ENCODE measurements at regions of chr4 and their contacts with region 1.

Region 1: DNA sequence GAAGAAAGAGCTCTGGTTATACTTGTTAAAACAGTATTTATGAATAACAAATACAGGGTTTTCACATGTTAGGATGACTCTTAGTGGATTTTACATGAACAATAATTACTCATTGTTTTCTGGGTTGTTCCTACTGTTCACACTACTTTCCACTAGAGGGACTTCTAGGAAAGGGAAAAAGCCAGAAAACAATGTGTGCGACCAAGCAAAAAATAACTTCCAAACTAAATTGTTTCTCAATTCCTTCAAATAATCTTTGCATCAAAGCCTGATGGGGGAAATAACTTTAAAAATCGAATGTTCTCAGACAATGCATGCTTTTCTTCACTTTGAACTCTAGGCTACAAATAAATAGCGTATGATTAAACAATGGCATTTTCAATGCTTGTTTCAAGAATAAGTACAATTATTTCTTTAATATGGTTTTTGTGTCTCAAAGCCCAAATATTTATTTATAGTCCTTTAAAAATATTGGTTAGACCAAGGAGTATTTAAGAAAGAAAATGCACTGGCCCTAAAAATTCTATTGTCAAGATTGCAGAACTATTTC is 72.1 kb upstream of the ETNPPL start:
- DNase-seq: no peak
- ATAC-seq: no peak
- H3K4me3 ChIP-seq: no peak overlapping the region
- H3K27ac ChIP-seq: no peak overlapping the region
- H3K4me1 ChIP-seq: peaks cover 7 to 10% of the 10 kb centered on the region in 2 donors
- H3K27me3 ChIP-seq: no peaks in the 10 kb centered on the region
- CTCF ChIP-seq: peak; percentile 24 to 62 (median 50)
- POLR2A ChIP-seq: no peak

Region 2: GRCh38 chr4:108917255-108917654 is 82.3 kb after region 1 on chr4:
- in situ Hi-C with region 1: no loop called
- intact Hi-C with region 1: loop called (anchors 10 kb)
- DNase-seq: no peak
- ATAC-seq: no peak
- H3K4me3 ChIP-seq: no peak overlapping the region
- H3K27ac ChIP-seq: no peak overlapping the region
- H3K4me1 ChIP-seq: peaks cover 5 to 15% of the 10 kb centered on the region in 2 donors
- H3K27me3 ChIP-seq: no peaks in the 10 kb centered on the region
- CTCF ChIP-seq: no peak
- POLR2A ChIP-seq: no peak

Region 3: GRCh38 chr4:109294006-109294405 is 459.1 kb after region 1 on chr4:
- in situ Hi-C with region 1: no loop called
- intact Hi-C with region 1: loop called (anchors 10 kb)
- DNase-seq: no peak
- ATAC-seq: peak in 1 of 2 donors; percentile 31
- H3K4me3 ChIP-seq: no peak overlapping the region
- H3K27ac ChIP-seq: no peak overlapping the region
- H3K4me1 ChIP-seq: peaks cover 0 to 5% of the 10 kb centered on the region in 2 donors
- H3K27me3 ChIP-seq: no peaks in the 10 kb centered on the region
- CTCF ChIP-seq: peak in 1 of 5 experiments; percentile 23
- POLR2A ChIP-seq: no peak

Region 4: DNA sequence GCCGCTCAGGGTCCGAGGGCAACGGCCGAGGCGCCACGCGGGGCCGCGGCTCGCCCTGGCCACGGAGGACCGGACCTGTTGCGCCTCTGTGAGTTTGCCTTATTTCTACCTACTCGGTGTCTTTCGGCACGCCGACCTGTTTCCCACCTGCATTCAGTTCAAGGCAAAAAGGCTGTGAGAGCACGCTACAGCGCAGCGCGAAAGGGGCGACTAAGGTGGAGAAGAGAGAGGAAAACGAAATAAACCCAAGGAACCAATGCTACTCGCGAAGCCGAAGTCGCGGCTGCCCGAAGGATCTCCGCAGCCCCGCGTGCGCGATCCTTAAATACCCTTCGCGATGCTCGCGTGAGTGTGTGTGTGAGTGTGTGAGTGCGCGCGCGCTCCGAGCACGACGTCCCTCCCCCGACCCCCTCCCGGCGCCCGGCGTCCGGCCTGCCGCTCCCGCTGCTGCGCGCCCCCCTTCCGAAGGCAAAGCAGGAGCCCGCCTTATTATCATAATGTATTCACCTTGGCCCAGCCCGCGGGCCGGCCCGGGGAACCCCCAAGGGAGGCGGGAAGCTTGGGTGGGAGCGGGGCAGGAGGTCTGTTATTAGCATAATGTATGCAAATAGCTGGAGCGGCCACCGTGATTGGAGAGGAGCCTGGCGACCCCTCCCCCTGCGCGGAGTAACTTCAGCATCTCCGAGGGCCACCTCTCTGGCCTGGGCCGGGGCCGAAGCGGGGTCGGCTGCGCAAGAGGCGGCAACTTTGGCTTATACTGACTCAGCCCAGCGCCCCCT is 467.6 kb after region 1 on chr4 and contains the start of gene COL25A1:
- in situ Hi-C with region 1: loop called in 1 of 4 experiments (anchors 25 kb)
- intact Hi-C with region 1: loop called (anchors 10 kb)
- DNase-seq: no peak
- ATAC-seq: peak; percentile 41 to 51
- H3K4me3 ChIP-seq: peak within 1 kb of the TSS; percentile 57 to 73 (median 65)
- H3K27ac ChIP-seq: peak within 1 kb of the TSS in 1 of 4 donors; percentile 23
- H3K4me1 ChIP-seq: peaks cover 16 to 17% of the 10 kb centered on the region in 2 donors
- H3K27me3 ChIP-seq: peaks cover 10 to 24% (median 24%) of the 10 kb centered on the region in 3 donors
- CTCF ChIP-seq: no peak
- POLR2A ChIP-seq: no peak
- total RNA-seq, gene COL25A1: 0.27 to 2.0 (median 0.85) TPM in 3 of 4 donors, not detected in the other

Region 5: DNA sequence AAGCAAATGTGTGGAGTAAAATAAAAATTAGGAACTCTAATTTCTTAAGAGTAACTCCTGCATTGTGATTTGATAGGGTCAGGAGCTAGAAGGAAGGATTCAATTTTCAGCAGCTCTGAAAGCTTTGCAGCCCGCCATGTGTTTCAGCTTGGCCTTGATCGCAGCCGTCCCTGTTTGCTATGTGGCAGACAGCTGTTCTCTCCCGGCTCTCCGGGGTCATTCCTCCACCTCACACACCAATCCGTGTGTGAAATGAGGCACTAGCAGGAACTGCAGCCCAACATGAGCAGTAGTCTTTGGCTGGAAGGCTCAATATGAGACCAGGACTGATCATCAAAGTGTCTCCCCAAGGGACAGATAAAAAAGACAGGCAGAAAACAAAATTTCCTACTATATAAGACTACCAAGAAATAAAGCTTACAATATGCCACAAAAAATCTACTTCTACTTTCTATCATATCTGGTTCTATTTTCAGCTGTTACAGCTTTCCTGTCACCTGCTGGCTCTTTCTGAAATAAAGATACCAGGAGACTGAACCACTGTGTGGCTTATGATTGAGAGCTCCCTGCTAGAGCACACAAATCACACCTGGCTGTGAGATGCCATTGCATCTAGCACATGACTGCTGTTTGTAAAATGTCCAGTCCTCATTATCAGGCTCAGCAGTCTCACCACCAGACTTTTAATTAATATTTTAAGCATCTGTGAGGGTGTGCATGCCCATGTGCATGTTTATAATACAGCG is 554.6 kb after region 1 on chr4:
- in situ Hi-C with region 1: loop called in 2 of 4 experiments (anchors 25 kb)
- intact Hi-C with region 1: no loop called
- DNase-seq: no peak
- ATAC-seq: peak in 1 of 2 donors; percentile 53
- H3K4me3 ChIP-seq: no peak overlapping the region
- H3K27ac ChIP-seq: peak overlapping the region in 1 of 4 donors; percentile 10
- H3K4me1 ChIP-seq: peaks cover 5 to 13% of the 10 kb centered on the region in 2 donors
- H3K27me3 ChIP-seq: no peaks in the 10 kb centered on the region
- CTCF ChIP-seq: no peak
- POLR2A ChIP-seq: no peak

Region 6: GRCh38 chr4:109406338-109406931 is 571.5 kb after region 1 on chr4:
- in situ Hi-C with region 1: loop called in 1 of 4 experiments (anchors 10 kb)
- intact Hi-C with region 1: loop called (anchors 2 kb)
- DNase-seq: no peak
- ATAC-seq: peak; percentile 73 to 80
- H3K4me3 ChIP-seq: no peak overlapping the region
- H3K27ac ChIP-seq: no peak overlapping the region
- H3K4me1 ChIP-seq: no peaks in the 10 kb centered on the region
- H3K27me3 ChIP-seq: no peaks in the 10 kb centered on the region
- CTCF ChIP-seq: peak; percentile 47 to 70 (median 63)
- POLR2A ChIP-seq: no peak